Mammary epithelial cell (primary cell): ENCODE measurements at regions of chrX and their contacts with region 1.

Region 1: DNA sequence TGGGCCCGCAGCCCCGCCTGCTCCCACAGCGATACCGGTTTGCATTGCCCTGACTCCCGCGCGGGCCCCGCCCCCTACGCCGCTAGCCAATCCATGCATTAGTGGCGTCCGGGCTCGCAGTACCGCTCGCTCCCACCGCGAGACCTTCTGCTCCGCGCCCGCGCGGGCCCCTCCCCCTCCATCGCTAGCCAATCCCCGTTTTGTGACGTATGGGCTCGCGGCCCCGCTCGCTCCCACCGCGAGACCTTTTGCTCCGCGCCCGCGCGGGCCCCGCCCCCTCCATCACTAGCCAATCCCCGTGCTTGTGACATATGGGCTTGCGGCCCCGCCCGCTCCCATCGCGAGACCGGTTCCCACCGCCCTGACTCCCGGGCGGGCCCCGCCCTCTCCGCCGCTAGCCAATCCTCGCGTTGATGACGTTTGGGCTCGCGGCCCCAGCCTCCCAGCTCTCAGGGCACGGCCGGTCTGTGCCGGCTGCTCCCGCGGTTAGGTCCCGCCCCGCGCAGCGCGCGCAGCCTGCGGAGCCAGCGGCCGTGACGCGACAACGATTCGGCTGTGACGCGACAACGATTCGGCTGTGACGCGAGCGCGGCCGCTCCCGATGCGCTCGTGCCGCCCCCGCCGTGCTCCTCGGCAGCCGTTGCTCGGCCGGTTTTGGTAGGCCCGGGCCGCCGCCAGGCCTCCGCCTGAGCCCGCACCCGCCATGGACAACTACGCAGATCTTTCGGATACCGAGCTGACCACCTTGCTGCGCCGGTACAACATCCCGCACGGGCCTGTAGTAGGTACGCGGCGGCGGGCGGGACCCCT is at the start of gene EMD:
- DNase-seq: peak; percentile 97
- H3K4me3 ChIP-seq: peak within 1 kb of the TSS; percentile 72 to 81 (median 76)
- H3K27ac ChIP-seq: peak within 1 kb of the TSS; percentile 95
- H3K4me1 ChIP-seq: peaks cover 25% of the 10 kb centered on the region
- H3K27me3 ChIP-seq: no peaks in the 10 kb centered on the region
- CTCF ChIP-seq: no peak
- total RNA-seq, gene EMD: 22.7 to 71.9 TPM

Region 2: DNA sequence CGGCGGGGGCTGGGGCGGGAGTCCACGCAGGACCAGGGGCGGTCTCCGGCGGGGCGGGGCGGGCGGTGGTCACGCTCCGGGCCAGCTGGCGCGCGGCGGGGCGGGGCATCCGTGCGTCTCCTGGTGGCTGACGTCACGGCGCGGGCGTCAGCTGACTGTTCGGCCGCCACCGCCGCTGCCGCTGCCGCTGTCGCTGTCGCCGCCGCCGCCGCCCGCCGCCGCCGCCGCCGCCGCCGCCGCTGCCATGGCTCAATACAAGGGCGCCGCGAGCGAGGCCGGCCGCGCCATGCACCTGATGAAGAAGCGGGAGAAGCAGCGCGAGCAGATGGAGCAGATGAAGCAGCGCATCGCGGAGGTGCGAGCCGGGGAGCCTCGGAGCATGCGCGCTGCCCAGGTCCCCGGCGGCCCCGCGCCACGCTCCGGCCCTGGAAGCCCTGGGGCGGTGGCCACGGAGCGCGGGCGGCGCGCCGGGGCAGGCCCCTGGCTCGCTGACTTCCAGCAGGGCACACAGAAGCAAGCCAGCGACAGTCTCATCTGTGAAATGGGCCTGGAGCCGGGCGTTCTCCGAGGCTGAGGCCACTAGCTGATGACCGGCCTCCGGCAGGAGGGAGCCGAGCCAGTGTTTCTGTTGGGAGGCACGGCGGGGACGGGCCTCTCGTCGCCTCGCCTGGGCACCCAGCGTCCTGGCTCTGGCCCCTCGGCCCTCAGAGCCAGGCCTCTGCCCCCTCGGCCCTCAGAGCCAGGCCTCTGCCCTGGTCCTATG is 65.2 kb after region 1 on chrX and contains the start of gene FAM50A:
- CTCF ChIA-PET with region 1: no interaction called
- dilution Hi-C with region 1: no loop called
- in situ Hi-C with region 1: no loop called
- intact Hi-C with region 1: loop called (anchors 10 kb)
- DNase-seq: no peak
- H3K4me3 ChIP-seq: peak within 1 kb of the TSS; percentile 41 to 60 (median 57)
- H3K27ac ChIP-seq: no peak within 1 kb of the TSS
- H3K4me1 ChIP-seq: peaks cover 16% of the 10 kb centered on the region
- H3K27me3 ChIP-seq: no peaks in the 10 kb centered on the region
- CTCF ChIP-seq: no peak
- total RNA-seq, gene FAM50A: 15.8 to 50.7 TPM